GM12878 (cell line): ENCODE measurements at regions of chr1 and their contacts with region 1.

Region 1: DNA sequence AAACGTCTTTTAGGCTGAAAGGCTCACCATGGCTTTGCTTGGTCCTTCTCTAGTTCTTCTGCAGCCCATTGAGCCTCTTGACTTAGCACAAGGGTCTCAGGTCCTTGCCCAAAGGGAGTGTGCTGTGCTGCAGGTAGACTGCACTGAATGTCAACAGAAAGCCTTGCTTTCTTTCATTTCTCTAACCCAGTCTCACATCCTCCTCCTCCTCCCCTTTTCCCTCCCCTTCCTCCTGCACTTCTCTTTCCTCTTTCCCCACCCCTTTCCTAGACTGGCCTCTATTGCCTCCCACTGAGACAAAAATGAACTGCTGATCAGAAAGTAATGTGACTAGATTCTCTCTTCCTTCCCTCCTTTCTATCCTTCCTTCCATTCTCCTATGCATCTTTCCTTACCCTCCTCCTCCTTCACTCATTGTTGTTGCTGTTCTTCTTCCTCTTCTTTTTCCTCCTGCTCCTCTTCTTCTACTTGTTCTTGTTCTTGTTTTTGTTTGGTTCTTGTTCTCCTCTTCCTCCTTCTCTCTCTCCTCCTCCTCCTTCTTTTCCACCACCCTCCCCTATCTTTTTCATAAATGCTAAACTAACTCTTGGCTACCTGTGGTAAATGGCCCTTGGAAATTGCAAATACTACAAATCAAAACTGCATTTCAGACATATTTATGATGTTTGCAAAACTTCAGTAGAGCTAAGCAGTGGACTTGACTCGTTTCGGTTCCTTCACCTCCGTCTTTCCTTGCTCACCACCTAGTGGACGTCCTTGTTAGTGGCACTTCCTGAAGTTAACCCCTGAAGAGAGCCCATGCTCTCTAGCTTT is at the start of gene SELL:
- DNase-seq: peak; percentile 90
- ATAC-seq: peak; percentile 79
- H3K4me3 ChIP-seq: peak within 1 kb of the TSS; percentile 45
- H3K27ac ChIP-seq: peak within 1 kb of the TSS; percentile 49
- H3K4me1 ChIP-seq: peaks cover 4% of the 10 kb centered on the region; the same call in 1 of the 2 replicates
- H3K27me3 ChIP-seq: no peaks in the 10 kb centered on the region
- CTCF ChIP-seq: peak; percentile 91 to 98 (median 95)
- EP300 ChIP-seq: no peak
- POLR2A ChIP-seq: peak; percentile 44; the same call in 1 of the 2 replicates
- RAD21 ChIP-seq: peak; percentile 99
- polyA plus RNA-seq, gene SELL: 53.5 to 63.2 TPM

Region 2: GRCh38 chr1:169456029-169456428 is 255.6 kb before region 1 on chr1:
- CTCF ChIA-PET with region 1: no interaction called
- POLR2A ChIA-PET with region 1: no interaction called
- RAD21 ChIA-PET with region 1: no interaction called
- SMC1A ChIA-PET with region 1: no interaction called
- in situ Hi-C with region 1: no loop called
- intact Hi-C with region 1: no loop called
- DNase-seq: no peak
- ATAC-seq: no peak
- H3K4me3 ChIP-seq: no peak overlapping the region
- H3K27ac ChIP-seq: no peak overlapping the region
- H3K4me1 ChIP-seq: no peaks in the 10 kb centered on the region
- H3K27me3 ChIP-seq: no peaks in the 10 kb centered on the region
- CTCF ChIP-seq: no peak
- EP300 ChIP-seq: no peak
- POLR2A ChIP-seq: no peak
- RAD21 ChIP-seq: no peak

Region 3: DNA sequence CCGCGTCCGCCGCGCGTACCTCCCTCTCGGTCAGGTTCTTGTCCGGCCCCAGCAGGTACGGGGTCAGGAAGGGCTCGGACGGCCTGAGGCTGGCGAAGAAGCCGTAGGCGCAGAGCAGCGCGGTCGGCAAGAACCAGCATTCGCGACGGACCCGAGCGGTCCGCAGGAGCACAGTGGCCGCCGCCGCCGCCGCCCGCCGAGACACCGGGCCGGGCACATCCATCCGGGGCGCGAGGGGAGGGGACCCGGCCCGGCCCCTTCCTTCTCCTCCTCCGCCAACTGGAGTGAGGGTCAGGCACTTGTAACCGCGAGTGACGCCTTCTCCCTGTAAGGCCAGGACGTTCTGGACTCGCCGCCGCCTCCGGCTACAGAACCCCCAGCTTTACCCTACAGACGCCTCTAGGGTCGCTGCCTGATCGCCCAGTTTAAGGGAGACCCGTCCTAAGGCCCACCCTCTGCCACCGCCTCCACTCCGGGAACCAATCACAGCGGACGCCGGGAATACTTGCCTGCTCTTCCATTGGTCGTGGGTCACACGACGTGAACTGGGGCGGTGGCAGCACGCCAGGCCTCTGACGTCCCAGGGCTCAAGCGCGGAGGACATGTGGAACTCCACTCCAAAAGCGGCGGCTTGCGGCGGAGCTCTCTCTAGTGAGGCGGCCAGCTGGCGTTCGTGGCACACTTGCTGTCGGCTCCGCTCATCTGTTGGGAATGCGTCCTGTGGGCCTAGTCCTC is 226.0 kb before region 1 on chr1 and contains the start of gene SLC19A2:
- CTCF ChIA-PET with region 1: no interaction called
- POLR2A ChIA-PET with region 1: no interaction called
- RAD21 ChIA-PET with region 1: no interaction called
- SMC1A ChIA-PET with region 1: no interaction called
- in situ Hi-C with region 1: no loop called
- intact Hi-C with region 1: loop called (anchors 1 kb)
- DNase-seq: peak; percentile 91
- ATAC-seq: peak; percentile 98
- H3K4me3 ChIP-seq: peak within 1 kb of the TSS; percentile 88
- H3K27ac ChIP-seq: peak within 1 kb of the TSS; percentile 68
- H3K4me1 ChIP-seq: peaks cover 8% of the 10 kb centered on the region
- H3K27me3 ChIP-seq: no peaks in the 10 kb centered on the region
- CTCF ChIP-seq: peak; percentile 30 to 53 (median 44); a peak in 5 of 6 replicates
- EP300 ChIP-seq: no peak; a peak in 1 of 4 replicates
- POLR2A ChIP-seq: peak; percentile 91
- RAD21 ChIP-seq: no peak
- polyA plus RNA-seq, gene SLC19A2: 1.2 to 1.3 TPM

Region 4: GRCh38 chr1:169586395-169587255 is 125.0 kb before region 1 on chr1 and contains the start of gene F5:
- CTCF ChIA-PET with region 1: interaction called, 78 read pairs
- POLR2A ChIA-PET with region 1: no interaction called
- RAD21 ChIA-PET with region 1: interaction called, 26 read pairs
- SMC1A ChIA-PET with region 1: interaction called, 25 read pairs
- in situ Hi-C with region 1: no loop called
- intact Hi-C with region 1: loop called (anchors 1 kb)
- DNase-seq: no peak
- ATAC-seq: peak; percentile 99
- H3K4me3 ChIP-seq: 0 out of 2 replicates have a peak within 1 kb of the TSS, but pooled peaks have one; percentile 15
- H3K27ac ChIP-seq: no peak within 1 kb of the TSS
- H3K4me1 ChIP-seq: peaks cover 5% of the 10 kb centered on the region; the same call in 1 of the 2 replicates
- H3K27me3 ChIP-seq: no peaks in the 10 kb centered on the region; a peak in 1 of 4 replicates
- CTCF ChIP-seq: peak; percentile 71 to 87 (median 77)
- EP300 ChIP-seq: no peak
- POLR2A ChIP-seq: no peak
- RAD21 ChIP-seq: peak; percentile 52
- polyA plus RNA-seq, gene F5: 0.29 to 0.46 TPM

Region 5: DNA sequence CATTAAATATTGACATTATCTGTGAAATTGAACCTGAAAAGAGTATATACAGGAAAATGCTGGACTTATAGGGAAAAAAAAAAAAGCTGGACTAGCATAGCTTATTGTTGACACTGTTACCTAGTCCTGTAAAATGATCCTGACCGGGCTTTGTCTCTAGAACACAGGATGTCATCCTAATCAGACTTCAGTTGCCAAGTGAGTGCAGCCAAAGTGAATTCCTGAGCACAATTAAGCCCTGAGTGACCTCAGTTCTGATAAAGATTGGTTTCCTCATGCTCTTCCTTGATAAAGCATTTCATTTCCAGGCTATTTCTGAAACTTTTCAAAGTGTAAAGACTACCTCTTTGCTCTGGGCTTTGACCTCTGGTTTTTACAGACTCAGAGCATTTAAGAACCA is 101.6 kb before region 1 on chr1:
- CTCF ChIA-PET with region 1: interaction called, 193 read pairs
- POLR2A ChIA-PET with region 1: no interaction called
- RAD21 ChIA-PET with region 1: interaction called, 5 read pairs
- SMC1A ChIA-PET with region 1: interaction called, 154 read pairs
- in situ Hi-C with region 1: no loop called
- intact Hi-C with region 1: no loop called
- DNase-seq: no peak
- ATAC-seq: no peak
- H3K4me3 ChIP-seq: no peak overlapping the region
- H3K27ac ChIP-seq: no peak overlapping the region
- H3K4me1 ChIP-seq: peaks cover 3% of the 10 kb centered on the region
- H3K27me3 ChIP-seq: no peaks in the 10 kb centered on the region
- CTCF ChIP-seq: no peak
- EP300 ChIP-seq: no peak
- POLR2A ChIP-seq: no peak
- RAD21 ChIP-seq: no peak

Region 6: DNA sequence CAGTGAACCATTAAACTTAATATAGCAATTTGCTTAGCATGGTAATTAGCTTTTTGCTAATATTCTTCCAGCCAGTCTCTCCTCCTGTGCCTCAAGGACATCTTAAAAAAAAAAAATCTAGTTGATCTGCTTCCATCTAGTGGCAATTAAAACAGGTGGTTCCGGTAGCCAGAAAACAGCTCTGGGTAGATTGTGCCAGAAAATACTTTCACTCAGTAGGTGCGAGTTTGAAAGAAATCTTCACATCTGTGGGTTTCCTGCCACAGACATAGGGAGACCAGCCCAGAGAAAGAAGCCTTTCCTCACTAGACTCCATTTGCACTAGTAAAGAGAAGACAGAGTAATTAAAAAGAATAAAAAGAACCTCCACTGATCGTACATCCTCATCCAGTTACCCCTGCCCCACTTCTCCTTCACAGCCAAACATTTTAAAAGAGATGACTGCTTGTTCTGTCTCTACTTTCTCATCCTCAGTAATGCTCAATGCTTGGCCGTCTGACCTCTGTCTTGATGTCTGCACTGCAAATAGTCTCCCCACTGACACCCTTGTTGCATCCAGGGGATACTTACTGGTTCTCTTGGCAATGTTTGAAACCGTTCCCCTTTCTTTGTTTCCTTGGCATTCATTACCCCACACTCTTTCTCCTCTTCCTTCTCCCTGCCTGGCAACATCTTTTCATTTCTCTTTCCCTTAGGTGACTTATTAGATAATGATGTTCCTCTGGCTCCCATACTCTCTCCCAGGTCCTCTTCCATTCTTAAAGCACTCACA is 17.2 kb before region 1 on chr1:
- CTCF ChIA-PET with region 1: interaction called, 48 read pairs
- POLR2A ChIA-PET with region 1: interaction called, 11 read pairs
- RAD21 ChIA-PET with region 1: interaction called, 40 read pairs
- SMC1A ChIA-PET with region 1: interaction called, 114 read pairs
- in situ Hi-C with region 1: no loop called
- intact Hi-C with region 1: loop called (anchors 2 kb)
- DNase-seq: no peak
- ATAC-seq: peak; percentile 51
- H3K4me3 ChIP-seq: no peak overlapping the region
- H3K27ac ChIP-seq: peak overlapping the region; percentile 67; the same call in 1 of the 2 replicates
- H3K4me1 ChIP-seq: peaks cover 80% of the 10 kb centered on the region
- H3K27me3 ChIP-seq: no peaks in the 10 kb centered on the region
- CTCF ChIP-seq: peak in 2 of 3 experiments; percentile 10 to 26; a peak in 2 of 6 replicates
- EP300 ChIP-seq: no peak
- POLR2A ChIP-seq: no peak
- RAD21 ChIP-seq: peak; percentile 42; the same call in 1 of the 2 replicates

Region 7: GRCh38 chr1:169731446-169731845 is 19.8 kb after region 1 on chr1:
- CTCF ChIA-PET with region 1: interaction called, 11 read pairs
- POLR2A ChIA-PET with region 1: no interaction called
- RAD21 ChIA-PET with region 1: no interaction called
- SMC1A ChIA-PET with region 1: interaction called, 6 read pairs
- in situ Hi-C with region 1: no loop called
- intact Hi-C with region 1: no loop called
- DNase-seq: no peak
- ATAC-seq: no peak
- H3K4me3 ChIP-seq: no peak overlapping the region
- H3K27ac ChIP-seq: no peak overlapping the region
- H3K4me1 ChIP-seq: no peaks in the 10 kb centered on the region
- H3K27me3 ChIP-seq: peaks cover 0 to 1% of the 10 kb centered on the region in 2 experiments; a peak in 2 of 4 replicates
- CTCF ChIP-seq: no peak
- EP300 ChIP-seq: no peak
- POLR2A ChIP-seq: no peak
- RAD21 ChIP-seq: no peak

Region 8: DNA sequence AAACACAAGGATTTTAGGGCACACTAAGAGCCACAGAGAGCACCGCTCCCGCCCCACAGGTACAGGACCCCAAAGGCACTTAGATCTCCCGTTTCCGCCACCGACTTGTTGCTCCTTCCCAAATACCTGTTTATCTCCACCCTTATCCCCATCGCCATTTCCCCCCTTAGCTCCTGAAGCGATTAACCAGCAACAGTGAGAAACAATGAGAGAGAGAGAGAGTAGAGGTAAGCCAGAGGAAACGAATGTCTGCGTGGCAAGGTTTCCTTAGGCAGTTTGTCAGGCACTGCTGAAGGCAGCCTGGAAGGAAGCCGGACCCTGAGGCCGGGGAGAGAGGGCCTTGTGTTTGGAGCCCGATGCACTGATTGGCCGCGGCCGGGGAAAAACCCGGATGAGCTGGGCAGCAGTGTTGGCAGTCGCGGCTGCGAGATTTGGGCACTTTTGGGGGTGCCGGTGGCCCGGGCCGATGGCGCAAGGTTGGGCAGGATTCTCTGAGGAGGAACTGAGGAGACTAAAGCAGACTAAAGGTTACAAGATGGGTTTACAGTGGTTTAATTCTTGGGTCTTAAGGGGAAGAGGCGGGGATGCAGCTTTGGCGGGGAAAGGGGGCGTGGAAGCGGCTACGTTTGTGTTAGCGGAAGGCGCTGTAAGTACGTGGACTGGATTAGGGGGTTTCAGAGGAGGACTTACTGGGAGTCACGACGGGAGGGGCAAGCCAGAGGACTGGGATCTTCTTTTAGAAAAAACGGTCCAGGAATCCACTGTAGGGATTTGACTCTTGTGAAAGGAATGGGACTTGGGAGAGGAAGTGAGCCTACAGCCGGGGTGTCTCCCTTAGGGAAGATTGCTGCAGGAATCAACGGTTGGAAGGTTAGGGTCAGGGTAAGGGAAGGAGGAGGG is 820.3 kb after region 1 on chr1 and contains the start of gene GORAB:
- CTCF ChIA-PET with region 1: no interaction called
- POLR2A ChIA-PET with region 1: no interaction called
- RAD21 ChIA-PET with region 1: no interaction called
- SMC1A ChIA-PET with region 1: no interaction called
- in situ Hi-C with region 1: no loop called
- intact Hi-C with region 1: loop called (anchors 10 kb)
- DNase-seq: peak; percentile 82
- ATAC-seq: peak; percentile 94
- H3K4me3 ChIP-seq: peak within 1 kb of the TSS; percentile 85
- H3K27ac ChIP-seq: peak within 1 kb of the TSS; percentile 99
- H3K4me1 ChIP-seq: no peaks in the 10 kb centered on the region
- H3K27me3 ChIP-seq: no peaks in the 10 kb centered on the region
- CTCF ChIP-seq: no peak
- EP300 ChIP-seq: no peak
- POLR2A ChIP-seq: peak; percentile 93
- RAD21 ChIP-seq: no peak
- polyA plus RNA-seq, gene GORAB: 5.5 to 7.6 TPM